Naive thymus-derived CD4-positive, alpha-beta T cell (primary cell): ENCODE measurements at regions of chr14 and their contacts with region 1.

Region 1: DNA sequence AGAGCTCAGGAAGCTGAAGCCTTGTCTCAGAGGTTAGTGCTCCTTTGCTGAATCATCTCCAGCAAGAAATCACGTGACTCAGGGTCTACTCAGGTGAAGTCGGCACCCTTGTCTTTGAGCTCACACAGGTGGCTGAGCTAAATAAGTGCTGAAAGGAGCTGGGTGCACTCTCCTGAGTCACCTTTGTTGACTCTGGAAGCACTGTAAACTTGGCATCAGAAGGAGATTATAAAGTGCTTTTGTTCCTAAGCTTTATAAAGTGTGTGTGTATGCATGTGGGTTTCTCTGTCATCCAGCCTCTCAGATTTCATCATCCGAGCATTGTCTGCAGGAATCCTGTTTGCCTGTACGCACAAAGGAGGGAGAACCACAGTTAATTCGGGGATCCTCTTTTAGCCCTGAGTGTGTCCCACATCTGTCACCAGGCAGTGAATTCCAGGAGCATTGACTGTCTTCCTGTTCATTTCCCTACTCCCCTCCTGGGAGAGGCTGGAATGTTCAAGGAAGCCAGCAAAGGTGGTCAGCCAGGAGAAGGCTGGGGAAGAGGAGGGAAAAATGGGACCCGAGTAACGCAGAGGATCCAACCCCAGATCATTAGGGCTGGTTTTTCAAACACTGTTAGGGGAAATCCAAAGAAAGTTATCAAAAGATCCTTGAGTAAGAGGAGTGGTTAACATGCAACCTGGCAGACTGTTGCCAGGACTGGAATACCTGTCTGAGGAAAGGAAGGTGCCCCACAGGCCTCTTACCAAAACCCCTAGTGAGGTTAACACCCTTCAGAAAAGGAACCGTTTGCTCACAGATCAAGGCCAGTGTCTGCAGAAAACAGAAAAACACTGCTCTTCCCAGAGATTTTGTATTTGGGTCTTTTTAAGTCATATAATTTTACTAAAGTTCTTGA is 157.5 kb upstream of the HIF1A start:
- DNase-seq: peak in 1 of 9 donors; percentile 29
- ATAC-seq: peak; percentile 24
- H3K4me3 ChIP-seq: no peak overlapping the region
- H3K4me3 Mint-ChIP-seq: peak overlapping the region in 1 of 10 donors; percentile 26
- H3K27ac ChIP-seq: peak overlapping the region; percentile 24
- H3K27ac Mint-ChIP-seq: peak overlapping the region; percentile 38 to 85 (median 66)
- H3K4me1 ChIP-seq: no peaks in the 10 kb centered on the region
- H3K4me1 Mint-ChIP-seq: peaks cover 15 to 74% (median 35%) of the 10 kb centered on the region in 7 donors
- H3K27me3 ChIP-seq: no peaks in the 10 kb centered on the region
- H3K27me3 Mint-ChIP-seq: no peaks in the 10 kb centered on the region

Region 2: GRCh38 chr14:61296719-61297502 is 240.9 kb before region 1 on chr14:
- CTCF ChIA-PET with region 1: interaction called, 3 read pairs
- POLR2A ChIA-PET with region 1: interaction called, 3 read pairs
- intact Hi-C with region 1: loop called in 1 of 2 experiments (anchors 10 kb)
- DNase-seq: peak in 7 of 9 donors; percentile 38 to 68 (median 52)
- ATAC-seq: peak; percentile 85
- H3K4me3 ChIP-seq: no peak overlapping the region
- H3K4me3 Mint-ChIP-seq: peak overlapping the region in 2 of 10 donors; percentile 20 to 39
- H3K27ac ChIP-seq: no peak overlapping the region
- H3K27ac Mint-ChIP-seq: peak overlapping the region in 7 of 9 donors; percentile 26 to 88 (median 66)
- H3K4me1 ChIP-seq: peaks cover 15 to 40% of the 10 kb centered on the region in 2 donors
- H3K4me1 Mint-ChIP-seq: peaks cover 18 to 59% (median 56%) of the 10 kb centered on the region in 7 donors
- H3K27me3 ChIP-seq: no peaks in the 10 kb centered on the region
- H3K27me3 Mint-ChIP-seq: no peaks in the 10 kb centered on the region

Region 3: GRCh38 chr14:61525293-61526011 is 12.4 kb before region 1 on chr14:
- CTCF ChIA-PET with region 1: no interaction called
- POLR2A ChIA-PET with region 1: no interaction called
- intact Hi-C with region 1: loop called in 1 of 2 experiments (anchors 1 kb)
- DNase-seq: peak in 1 of 9 donors; percentile 69
- ATAC-seq: peak; percentile 74
- H3K4me3 ChIP-seq: no peak overlapping the region
- H3K4me3 Mint-ChIP-seq: peak overlapping the region in 3 of 10 donors; percentile 2 to 73 (median 63)
- H3K27ac ChIP-seq: peak overlapping the region; percentile 34
- H3K27ac Mint-ChIP-seq: peak overlapping the region; percentile 69 to 90 (median 81)
- H3K4me1 ChIP-seq: peaks cover 22 to 68% of the 10 kb centered on the region in 2 donors
- H3K4me1 Mint-ChIP-seq: peaks cover 43 to 86% (median 73%) of the 10 kb centered on the region in 7 donors
- H3K27me3 ChIP-seq: no peaks in the 10 kb centered on the region
- H3K27me3 Mint-ChIP-seq: no peaks in the 10 kb centered on the region

Region 4: DNA sequence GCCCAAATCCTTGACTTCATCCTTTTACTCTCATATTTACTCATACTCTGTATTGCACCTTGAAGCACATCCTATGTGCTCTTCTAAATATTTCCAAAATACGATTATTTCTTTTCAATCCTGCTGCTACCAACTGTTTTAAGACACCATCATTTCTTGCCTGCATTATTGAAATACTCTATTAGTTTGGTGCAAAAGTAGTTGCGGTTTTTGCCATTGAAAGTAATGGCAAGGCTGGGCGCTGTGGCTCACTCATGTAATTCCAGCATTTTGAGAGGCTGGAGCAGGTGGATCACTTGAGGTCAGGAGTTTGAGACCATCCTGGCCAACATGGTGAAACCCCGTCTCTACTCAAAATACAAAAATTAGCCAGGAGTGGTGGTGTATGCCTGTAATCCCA is 1095.0 kb after region 1 on chr14:
- CTCF ChIA-PET with region 1: no interaction called
- POLR2A ChIA-PET with region 1: no interaction called
- intact Hi-C with region 1: no loop called
- DNase-seq: no peak
- ATAC-seq: no peak
- H3K4me3 ChIP-seq: no peak overlapping the region
- H3K4me3 Mint-ChIP-seq: no peak overlapping the region
- H3K27ac ChIP-seq: no peak overlapping the region
- H3K27ac Mint-ChIP-seq: no peak overlapping the region
- H3K4me1 ChIP-seq: no peaks in the 10 kb centered on the region
- H3K4me1 Mint-ChIP-seq: no peaks in the 10 kb centered on the region
- H3K27me3 ChIP-seq: no peaks in the 10 kb centered on the region
- H3K27me3 Mint-ChIP-seq: peaks cover 0 to 6% (median 0%) of the 10 kb centered on the region in 5 donors